Caco-2 (cell line): ENCODE measurements at regions of chr16 and their contacts with region 1.

Region 1: GRCh38 chr16:143456-143855 is 5.0 kb upstream of the NPRL3 start:
- DNase-seq: no peak
- H3K4me3 ChIP-seq: no peak overlapping the region
- H3K4me3 Mint-ChIP-seq: no peak overlapping the region
- H3K27ac Mint-ChIP-seq: no peak overlapping the region
- H3K4me1 ChIP-seq: 0 out of 2 replicates have a peak, but pooled peaks cover 5% of the 10 kb centered on the region
- H3K4me1 Mint-ChIP-seq: peaks cover 5% of the 10 kb centered on the region
- H3K27me3 ChIP-seq: no peaks in the 10 kb centered on the region; the same call in 1 of the 2 replicates
- H3K27me3 Mint-ChIP-seq: no peaks in the 10 kb centered on the region
- CTCF ChIP-seq: no peak

Region 2: DNA sequence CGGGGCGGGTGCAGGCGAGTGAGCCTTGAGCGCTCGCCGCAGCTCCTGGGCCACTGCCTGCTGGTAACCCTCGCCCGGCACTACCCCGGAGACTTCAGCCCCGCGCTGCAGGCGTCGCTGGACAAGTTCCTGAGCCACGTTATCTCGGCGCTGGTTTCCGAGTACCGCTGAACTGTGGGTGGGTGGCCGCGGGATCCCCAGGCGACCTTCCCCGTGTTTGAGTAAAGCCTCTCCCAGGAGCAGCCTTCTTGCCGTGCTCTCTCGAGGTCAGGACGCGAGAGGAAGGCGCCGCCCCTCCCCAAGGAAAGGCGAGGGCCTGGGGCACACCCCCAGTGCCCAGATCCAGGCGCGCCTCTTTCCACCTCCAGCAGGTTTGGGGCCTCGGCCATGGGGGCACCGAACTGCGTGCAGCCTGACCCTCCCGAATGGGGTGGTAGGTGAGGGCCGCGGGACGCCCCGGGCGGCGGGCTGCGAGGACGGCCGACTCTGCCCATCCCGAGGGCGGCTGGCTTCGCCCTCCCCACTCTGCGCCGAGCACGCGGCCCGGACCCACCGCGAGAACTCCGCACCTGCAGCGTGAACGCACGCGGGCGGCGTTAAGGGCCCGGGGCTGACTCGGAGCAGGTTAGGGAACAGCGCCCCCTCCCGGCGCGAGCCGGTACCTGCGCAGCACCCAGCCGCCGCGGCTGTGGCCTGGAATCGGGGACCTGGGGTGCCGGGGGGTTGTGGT is 37.6 kb after region 1 on chr16:
- CTCF ChIA-PET with region 1: no interaction called
- POLR2A ChIA-PET with region 1: no interaction called
- intact Hi-C with region 1: no loop called
- DNase-seq: peak; percentile 86 to 92
- H3K4me3 ChIP-seq: peak overlapping the region; percentile 83
- H3K4me3 Mint-ChIP-seq: peak overlapping the region; percentile 64
- H3K27ac Mint-ChIP-seq: no peak overlapping the region
- H3K4me1 ChIP-seq: peaks cover 5% of the 10 kb centered on the region
- H3K4me1 Mint-ChIP-seq: no peaks in the 10 kb centered on the region
- H3K27me3 ChIP-seq: no peaks in the 10 kb centered on the region
- H3K27me3 Mint-ChIP-seq: no peaks in the 10 kb centered on the region
- CTCF ChIP-seq: peak; percentile 91 to 92

Region 3: DNA sequence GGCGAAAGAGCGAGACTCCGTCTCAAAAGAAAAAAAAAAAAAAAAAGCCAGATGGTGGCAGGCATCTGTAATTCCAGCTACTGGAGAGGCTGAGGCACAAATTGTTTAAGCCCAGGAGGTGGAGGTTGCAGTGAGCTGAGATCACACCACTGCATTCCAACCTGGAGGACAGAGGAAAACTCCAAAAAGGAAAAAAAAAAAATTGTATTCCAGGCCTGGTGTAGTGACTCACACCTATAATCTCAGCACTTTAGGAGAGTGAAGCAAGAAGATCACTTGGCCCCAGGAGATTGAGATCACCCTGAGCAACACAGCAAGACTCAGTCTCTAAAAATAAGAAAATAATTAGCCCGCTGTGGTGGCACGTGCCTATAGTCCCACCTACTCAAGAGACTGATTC is 56.9 kb after region 1 on chr16:
- CTCF ChIA-PET with region 1: no interaction called
- POLR2A ChIA-PET with region 1: no interaction called
- intact Hi-C with region 1: no loop called
- DNase-seq: no peak
- H3K4me3 ChIP-seq: no peak overlapping the region
- H3K4me3 Mint-ChIP-seq: no peak overlapping the region
- H3K27ac Mint-ChIP-seq: no peak overlapping the region
- H3K4me1 ChIP-seq: no peaks in the 10 kb centered on the region
- H3K4me1 Mint-ChIP-seq: no peaks in the 10 kb centered on the region
- H3K27me3 ChIP-seq: no peaks in the 10 kb centered on the region
- H3K27me3 Mint-ChIP-seq: no peaks in the 10 kb centered on the region
- CTCF ChIP-seq: no peak

Region 4: GRCh38 chr16:318628-319027 is 175.2 kb after region 1 on chr16:
- CTCF ChIA-PET with region 1: no interaction called
- POLR2A ChIA-PET with region 1: interaction called, 10 read pairs
- intact Hi-C with region 1: no loop called
- DNase-seq: peak in 1 of 2 experiments; percentile 57
- H3K4me3 ChIP-seq: no peak overlapping the region
- H3K4me3 Mint-ChIP-seq: no peak overlapping the region
- H3K27ac Mint-ChIP-seq: no peak overlapping the region
- H3K4me1 ChIP-seq: no peaks in the 10 kb centered on the region
- H3K4me1 Mint-ChIP-seq: no peaks in the 10 kb centered on the region
- H3K27me3 ChIP-seq: no peaks in the 10 kb centered on the region
- H3K27me3 Mint-ChIP-seq: no peaks in the 10 kb centered on the region
- CTCF ChIP-seq: peak; percentile 21 to 42